B cell (primary cell): ENCODE measurements at regions of chr16 and their contacts with region 1.

Region 1: DNA sequence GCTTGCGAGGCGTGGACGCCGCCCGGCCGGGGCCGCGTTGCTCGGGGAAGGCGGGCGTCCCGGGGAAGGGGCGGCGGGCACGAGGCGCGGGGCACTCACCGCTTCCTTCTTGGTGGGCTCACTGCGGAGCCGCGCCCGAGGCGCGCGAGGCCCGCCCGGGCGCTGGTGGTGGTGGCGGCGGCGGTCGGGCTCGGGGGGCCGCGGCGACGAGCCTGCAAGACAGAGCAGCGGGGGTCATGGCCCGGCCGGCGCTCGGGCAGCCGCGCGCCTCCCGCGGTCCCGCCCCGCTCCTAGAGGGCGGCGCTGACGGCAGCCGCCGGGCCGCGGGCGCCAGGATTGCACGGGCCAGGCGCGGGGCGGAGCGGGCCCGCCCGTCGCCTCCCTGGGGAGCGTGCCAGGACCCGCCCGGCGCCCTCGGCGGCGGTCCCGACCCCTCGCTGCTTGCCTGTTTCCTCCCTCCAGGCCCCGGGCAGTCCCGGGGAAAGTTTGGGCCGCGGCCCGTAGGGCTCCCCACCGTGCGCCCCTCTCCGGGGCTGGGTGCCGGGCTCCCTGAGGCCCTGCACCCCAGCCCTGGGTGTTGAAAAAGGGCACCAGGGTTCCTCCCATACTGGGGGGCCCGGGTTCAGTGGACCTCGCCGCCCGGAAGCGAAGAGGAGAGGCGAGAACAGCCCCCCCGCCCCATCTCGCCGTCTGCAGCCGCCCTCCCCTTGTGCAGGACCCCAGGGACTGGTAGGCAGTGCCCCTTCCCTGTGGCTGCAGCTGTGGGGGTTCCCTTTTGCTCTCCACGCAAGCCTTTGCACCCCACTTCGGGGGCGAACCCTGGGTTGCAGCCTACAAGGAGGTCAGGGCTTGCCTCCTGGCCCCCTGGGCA is at the start of gene C16orf74:
- DNase-seq: peak; percentile 71
- ATAC-seq: peak; percentile 56
- H3K4me3 ChIP-seq: peak within 1 kb of the TSS; percentile 16 to 81 (median 76)
- H3K4me3 Mint-ChIP-seq: peak within 1 kb of the TSS; percentile 97
- H3K27ac ChIP-seq: peak within 1 kb of the TSS; percentile 58 to 68
- H3K27ac Mint-ChIP-seq: peak within 1 kb of the TSS; percentile 100
- H3K4me1 ChIP-seq: peaks cover 80 to 94% of the 10 kb centered on the region in 2 donors
- H3K4me1 Mint-ChIP-seq: peaks cover 72% of the 10 kb centered on the region
- H3K27me3 ChIP-seq: no peaks in the 10 kb centered on the region
- H3K27me3 Mint-ChIP-seq: no peaks in the 10 kb centered on the region
- CTCF ChIP-seq: no peak
- total RNA-seq, gene C16orf74: 83.3 and 92.6 TPM in 2 replicates

Region 2: DNA sequence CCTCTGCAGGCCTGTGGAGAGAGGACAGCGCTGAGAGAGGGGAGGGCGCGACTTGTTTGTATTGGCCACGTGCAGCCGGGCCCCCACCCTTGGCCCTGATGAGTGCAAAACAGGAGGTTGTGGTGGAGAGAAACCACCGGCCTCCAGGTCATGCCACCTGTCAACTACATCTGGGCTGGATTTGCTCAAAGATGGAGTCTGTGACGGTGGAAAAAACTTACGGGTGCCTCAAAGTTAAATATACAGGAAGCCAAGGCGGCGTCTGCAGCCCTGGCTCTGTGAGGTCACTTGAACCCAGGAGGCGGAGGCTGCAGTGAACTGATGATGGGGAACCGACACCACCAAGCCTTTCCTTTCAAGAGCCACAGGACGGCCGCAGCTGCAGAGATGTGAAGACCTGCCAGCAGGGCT is 15.8 kb before region 1 on chr16:
- CTCF ChIA-PET with region 1: interaction called, 17 read pairs
- POLR2A ChIA-PET with region 1: interaction called, 24 read pairs
- intact Hi-C with region 1: loop called (anchors 1 kb)
- DNase-seq: peak; percentile 68
- ATAC-seq: peak; percentile 81
- H3K4me3 ChIP-seq: peak overlapping the region in 4 of 5 experiments; percentile 3 to 38 (median 22)
- H3K4me3 Mint-ChIP-seq: peak overlapping the region; percentile 69
- H3K27ac ChIP-seq: peak overlapping the region in 1 of 2 donors; percentile 11
- H3K27ac Mint-ChIP-seq: peak overlapping the region; percentile 68
- H3K4me1 ChIP-seq: peaks cover 30 to 34% of the 10 kb centered on the region in 2 donors
- H3K4me1 Mint-ChIP-seq: peaks cover 33% of the 10 kb centered on the region
- H3K27me3 ChIP-seq: no peaks in the 10 kb centered on the region
- H3K27me3 Mint-ChIP-seq: no peaks in the 10 kb centered on the region
- CTCF ChIP-seq: no peak

Region 3: DNA sequence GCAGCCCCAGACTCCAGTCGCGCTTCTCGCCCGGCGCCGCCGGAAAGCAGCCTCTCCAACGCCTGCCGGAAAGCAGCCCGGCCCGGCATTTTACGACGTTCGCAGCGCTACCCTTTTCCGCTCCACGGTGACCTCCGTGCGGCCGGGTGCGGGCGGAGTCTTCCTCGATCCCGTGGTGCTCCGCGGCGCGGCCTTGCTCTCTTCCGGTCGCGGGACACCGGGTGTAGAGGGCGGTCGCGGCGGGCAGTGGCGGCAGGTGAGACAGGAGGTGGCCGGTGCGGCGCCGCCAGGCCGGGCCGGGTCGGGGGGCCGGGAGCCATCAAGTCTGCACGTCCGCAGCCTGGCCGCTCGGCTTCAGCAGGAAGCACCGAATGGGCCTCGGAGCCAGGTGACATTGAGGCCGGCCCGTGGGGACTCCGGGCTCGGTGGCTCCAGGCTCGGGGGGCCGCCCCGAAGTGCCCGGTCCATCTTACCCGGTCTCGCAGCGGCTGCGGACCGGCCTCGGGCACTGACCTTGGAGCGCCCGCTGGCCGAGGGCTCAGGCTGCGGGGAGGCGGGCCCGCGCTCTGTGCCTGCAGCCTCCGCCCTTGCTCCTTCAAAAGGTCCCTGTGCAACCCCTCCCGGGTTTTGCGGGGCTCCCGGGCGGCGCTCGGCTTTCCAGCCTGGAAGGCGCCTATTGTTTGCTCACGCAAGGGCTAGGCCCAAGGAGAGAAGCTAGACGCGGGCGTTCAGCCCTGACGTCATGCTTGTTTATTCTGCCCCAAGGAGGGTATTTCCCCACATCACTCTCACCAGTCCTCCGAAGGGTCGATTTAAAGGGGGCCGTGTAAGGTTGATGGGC is 48.7 kb after region 1 on chr16 and contains the starts of genes COX4I1 and EMC8:
- CTCF ChIA-PET with region 1: interaction called, 3 read pairs
- POLR2A ChIA-PET with region 1: interaction called, 9 read pairs
- intact Hi-C with region 1: loop called (anchors 2 kb)
- DNase-seq: peak; percentile 95
- ATAC-seq: peak; percentile 86
- H3K4me3 ChIP-seq: peak within 1 kb of the TSS; percentile 73 to 93 (median 78)
- H3K4me3 Mint-ChIP-seq: peak within 1 kb of the TSS; percentile 92
- H3K27ac ChIP-seq: peak within 1 kb of the TSS; percentile 82 to 97
- H3K27ac Mint-ChIP-seq: peak within 1 kb of the TSS; percentile 98
- H3K4me1 ChIP-seq: peaks cover 19 to 23% of the 10 kb centered on the region in 2 donors
- H3K4me1 Mint-ChIP-seq: peaks cover 57% of the 10 kb centered on the region
- H3K27me3 ChIP-seq: no peaks in the 10 kb centered on the region
- H3K27me3 Mint-ChIP-seq: no peaks in the 10 kb centered on the region
- CTCF ChIP-seq: no peak
- total RNA-seq, gene COX4I1: 767 and 813 TPM in 2 replicates
- total RNA-seq, gene EMC8: 32.9 and 33.1 TPM in 2 replicates